ENCODE measurements at regions of chr10 and their contacts with region 1.

Region 1: DNA sequence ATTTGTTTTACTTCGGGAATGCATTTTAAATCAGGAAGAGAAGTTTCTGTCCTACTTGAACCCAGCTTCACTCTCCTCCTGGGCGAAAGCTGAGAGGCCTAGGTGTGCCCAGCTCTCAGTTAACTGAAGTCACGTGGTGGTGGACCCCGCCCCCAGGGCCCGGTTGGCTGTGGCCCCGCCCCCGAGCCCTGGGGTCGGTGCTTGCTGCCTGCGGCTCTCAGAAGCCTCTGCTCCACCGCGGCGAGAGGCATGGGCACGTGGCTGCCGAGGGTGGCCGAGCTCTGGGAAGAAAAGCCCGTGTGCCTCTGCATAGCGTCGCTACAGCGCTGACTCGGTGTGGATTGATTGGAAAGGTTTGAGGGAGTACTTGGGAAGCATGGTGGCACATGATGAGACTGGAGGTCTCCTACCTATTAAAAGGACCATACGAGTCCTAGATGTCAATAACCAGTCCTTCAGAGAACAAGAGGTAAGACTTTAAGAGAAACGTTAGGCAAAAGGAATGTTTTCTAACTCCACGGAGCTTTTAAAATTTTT is 34.1 kb downstream of the NET1 start:
- DNase-seq: peak; percentile 94 to 98
- H3K4me3 ChIP-seq: peak overlapping the region; percentile 96
- H3K4me3 Mint-ChIP-seq: peak overlapping the region; percentile 91
- H3K27ac Mint-ChIP-seq: peak overlapping the region; percentile 82
- H3K4me1 ChIP-seq: peaks cover 27% of the 10 kb centered on the region
- H3K4me1 Mint-ChIP-seq: peaks cover 13% of the 10 kb centered on the region
- H3K27me3 ChIP-seq: no peaks in the 10 kb centered on the region
- H3K27me3 Mint-ChIP-seq: no peaks in the 10 kb centered on the region
- CTCF ChIP-seq: peak in 1 of 2 experiments; percentile 6

Region 2: GRCh38 chr10:5466418-5467154 is 20.1 kb after region 1 on chr10:
- CTCF ChIA-PET with region 1: interaction called, 11 read pairs
- POLR2A ChIA-PET with region 1: interaction called, 4 read pairs
- intact Hi-C with region 1: loop called (anchors 2 kb)
- DNase-seq: peak in 1 of 2 experiments; percentile 45
- H3K4me3 ChIP-seq: no peak overlapping the region
- H3K4me3 Mint-ChIP-seq: no peak overlapping the region
- H3K27ac Mint-ChIP-seq: peak overlapping the region; percentile 40
- H3K4me1 ChIP-seq: peaks cover 39% of the 10 kb centered on the region
- H3K4me1 Mint-ChIP-seq: peaks cover 21% of the 10 kb centered on the region
- H3K27me3 ChIP-seq: no peaks in the 10 kb centered on the region
- H3K27me3 Mint-ChIP-seq: no peaks in the 10 kb centered on the region
- CTCF ChIP-seq: no peak

Region 3: DNA sequence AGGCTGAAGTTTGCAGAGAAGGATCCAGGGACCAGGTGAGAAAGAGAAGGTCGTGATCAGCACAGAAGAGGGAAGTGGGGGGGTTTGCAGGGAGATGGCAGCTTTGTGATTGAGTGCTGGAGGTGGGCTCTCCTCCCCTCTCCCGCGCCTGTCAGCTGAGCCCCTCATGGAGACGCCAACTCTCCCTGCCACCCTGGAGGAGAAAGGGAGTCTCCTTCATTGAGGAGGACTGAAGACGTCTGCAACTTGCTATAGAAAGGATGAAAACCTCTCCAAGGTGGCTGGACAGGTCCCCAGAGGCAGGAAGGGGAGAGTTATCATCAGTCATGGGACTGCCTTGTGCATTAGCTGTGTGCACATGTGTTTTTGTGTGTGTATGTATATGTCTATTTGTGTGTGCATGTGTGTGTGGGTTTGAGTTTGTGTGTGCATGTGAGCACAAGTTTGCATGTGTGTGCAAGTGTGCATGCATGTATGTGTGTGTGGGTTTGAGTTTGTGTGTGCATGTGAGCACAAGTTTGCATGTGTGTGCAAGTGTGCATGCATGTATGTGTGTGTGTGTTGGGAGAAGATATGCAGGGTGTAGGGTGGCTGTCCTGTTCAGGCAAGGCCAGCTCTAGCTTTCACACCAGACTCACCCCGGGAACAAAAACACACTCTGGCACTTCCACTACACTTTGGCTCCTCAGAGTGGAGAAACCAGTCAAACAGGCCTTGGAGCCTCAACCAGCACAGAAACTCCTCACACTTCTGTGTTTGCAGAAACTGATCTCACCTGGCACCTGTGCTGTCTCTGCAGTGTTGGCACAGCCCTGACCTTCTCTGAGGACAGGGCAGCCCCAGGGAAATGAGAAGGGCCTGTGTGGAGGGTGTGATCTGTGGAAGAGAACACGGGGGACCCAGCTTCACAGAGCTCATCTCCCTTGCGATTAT is 56.7 kb after region 1 on chr10:
- CTCF ChIA-PET with region 1: interaction called, 3 read pairs
- POLR2A ChIA-PET with region 1: interaction called, 5 read pairs
- intact Hi-C with region 1: loop called (anchors 2 kb)
- DNase-seq: peak; percentile 83 to 84
- H3K4me3 ChIP-seq: no peak overlapping the region
- H3K4me3 Mint-ChIP-seq: peak overlapping the region; percentile 25
- H3K27ac Mint-ChIP-seq: peak overlapping the region; percentile 84
- H3K4me1 ChIP-seq: peaks cover 32% of the 10 kb centered on the region
- H3K4me1 Mint-ChIP-seq: peaks cover 38% of the 10 kb centered on the region
- H3K27me3 ChIP-seq: no peaks in the 10 kb centered on the region
- H3K27me3 Mint-ChIP-seq: no peaks in the 10 kb centered on the region
- CTCF ChIP-seq: no peak

Region 4: DNA sequence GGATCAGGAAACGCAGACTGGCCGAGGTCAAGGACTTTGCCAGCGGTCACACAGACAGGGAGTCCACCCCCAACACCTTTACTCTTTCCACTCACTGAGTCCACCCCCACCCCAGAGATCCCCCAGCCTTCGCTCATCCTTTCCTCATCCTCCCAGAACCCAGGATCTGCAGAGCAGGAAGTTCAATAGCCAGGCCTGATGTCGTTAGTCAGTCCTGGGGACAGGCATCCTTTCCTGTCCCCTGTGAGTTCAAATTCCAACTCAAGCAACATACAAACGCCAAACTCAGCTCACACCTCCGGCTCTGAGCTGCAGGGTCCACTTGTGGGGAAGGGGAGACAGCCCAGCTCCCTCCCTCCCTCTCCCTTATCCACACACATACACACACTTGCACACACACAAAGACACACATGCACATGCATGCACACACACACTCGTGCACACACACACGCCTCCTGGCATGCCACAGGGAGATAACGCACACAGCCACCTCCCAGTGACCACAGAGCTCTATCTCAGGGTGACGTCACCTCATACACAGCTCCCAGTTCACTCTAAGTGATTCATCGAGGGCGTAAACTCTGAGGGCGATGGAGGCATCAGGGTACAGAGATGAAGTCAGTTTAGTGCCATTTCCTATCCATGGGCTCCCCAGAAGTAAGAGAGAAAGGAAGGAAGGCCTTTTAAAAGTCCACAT is 102.2 kb after region 1 on chr10:
- CTCF ChIA-PET with region 1: no interaction called
- POLR2A ChIA-PET with region 1: interaction called, 14 read pairs
- intact Hi-C with region 1: no loop called
- DNase-seq: peak; percentile 77 to 90
- H3K4me3 ChIP-seq: no peak overlapping the region
- H3K4me3 Mint-ChIP-seq: no peak overlapping the region
- H3K27ac Mint-ChIP-seq: no peak overlapping the region
- H3K4me1 ChIP-seq: peaks cover 65% of the 10 kb centered on the region
- H3K4me1 Mint-ChIP-seq: peaks cover 21% of the 10 kb centered on the region
- H3K27me3 ChIP-seq: no peaks in the 10 kb centered on the region
- H3K27me3 Mint-ChIP-seq: no peaks in the 10 kb centered on the region
- CTCF ChIP-seq: no peak

Region 5: DNA sequence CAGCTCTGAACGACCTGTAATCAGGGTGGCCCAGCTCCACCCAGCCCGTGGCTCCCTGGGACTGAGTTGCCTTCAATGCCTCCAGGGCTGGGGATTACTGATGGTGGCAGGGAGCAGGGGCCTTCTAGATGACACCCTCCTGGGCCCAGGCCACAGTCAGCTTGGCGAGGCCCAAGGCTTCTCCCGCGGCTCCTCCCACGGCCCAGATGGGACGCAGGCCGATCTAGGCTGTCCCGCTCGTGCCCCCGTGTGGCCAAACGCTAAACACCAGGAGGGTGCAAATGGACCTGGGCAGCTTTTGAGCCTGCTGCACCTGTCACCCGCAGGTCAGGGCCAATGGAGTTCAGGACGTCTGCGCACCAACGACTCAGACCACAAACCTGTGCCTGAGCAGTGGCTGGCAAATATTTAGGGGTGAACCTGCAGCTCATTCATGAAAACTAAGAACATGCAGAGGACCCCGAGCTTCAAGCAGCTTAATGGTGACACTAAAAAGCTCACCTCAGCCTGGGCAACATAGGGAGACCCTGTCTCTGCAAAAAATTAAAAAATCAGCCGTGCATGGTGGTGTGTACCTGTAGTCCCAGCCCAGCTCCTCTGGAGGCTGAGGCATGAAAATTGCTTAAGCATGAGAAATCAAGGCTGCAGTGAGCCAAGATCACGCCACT is 176.8 kb after region 1 on chr10:
- CTCF ChIA-PET with region 1: interaction called, 46 read pairs
- POLR2A ChIA-PET with region 1: interaction called, 14 read pairs
- intact Hi-C with region 1: loop called (anchors 1 kb)
- DNase-seq: peak; percentile 94 to 97
- H3K4me3 ChIP-seq: no peak overlapping the region
- H3K4me3 Mint-ChIP-seq: no peak overlapping the region
- H3K27ac Mint-ChIP-seq: peak overlapping the region; percentile 46
- H3K4me1 ChIP-seq: peaks cover 23% of the 10 kb centered on the region
- H3K4me1 Mint-ChIP-seq: peaks cover 20% of the 10 kb centered on the region
- H3K27me3 ChIP-seq: no peaks in the 10 kb centered on the region
- H3K27me3 Mint-ChIP-seq: no peaks in the 10 kb centered on the region
- CTCF ChIP-seq: peak; percentile 97

Region 6: GRCh38 chr10:5684318-5684970 is 238.0 kb after region 1 on chr10 and contains the start of gene TASOR2:
- CTCF ChIA-PET with region 1: no interaction called
- POLR2A ChIA-PET with region 1: interaction called, 7 read pairs
- intact Hi-C with region 1: loop called (anchors 2 kb)
- DNase-seq: peak; percentile 100
- H3K4me3 ChIP-seq: peak within 1 kb of the TSS; percentile 97
- H3K4me3 Mint-ChIP-seq: peak within 1 kb of the TSS; percentile 86
- H3K27ac Mint-ChIP-seq: peak within 1 kb of the TSS; percentile 96
- H3K4me1 ChIP-seq: peaks cover 12% of the 10 kb centered on the region
- H3K4me1 Mint-ChIP-seq: peaks cover 12% of the 10 kb centered on the region
- H3K27me3 ChIP-seq: no peaks in the 10 kb centered on the region
- H3K27me3 Mint-ChIP-seq: no peaks in the 10 kb centered on the region
- CTCF ChIP-seq: no peak
- total RNA-seq, gene TASOR2: 102 and 108 TPM in 2 replicates

Region 7: DNA sequence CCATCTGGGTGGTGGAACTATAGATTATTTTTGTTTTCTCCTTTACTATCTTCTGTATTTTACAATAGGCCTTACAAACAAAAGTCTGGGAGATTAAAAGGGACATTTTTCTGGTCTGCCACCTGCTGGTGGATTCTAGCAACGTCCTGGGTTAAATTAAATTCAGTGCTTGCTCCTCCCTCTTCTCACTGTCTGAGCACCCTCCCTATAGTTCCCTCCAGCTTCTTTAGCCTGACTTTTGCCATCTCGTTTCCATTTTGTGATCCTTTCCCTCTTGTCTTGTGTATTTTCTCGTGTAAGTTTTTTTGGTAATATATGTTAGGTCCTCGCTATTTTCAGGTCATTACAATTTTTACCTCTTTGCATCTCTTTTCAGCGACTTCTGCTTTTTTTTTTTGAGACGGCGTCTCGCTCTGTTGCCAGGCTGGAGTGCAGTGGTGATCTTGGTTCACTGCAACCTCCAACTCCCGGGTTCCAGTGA is 427.1 kb after region 1 on chr10:
- CTCF ChIA-PET with region 1: no interaction called
- POLR2A ChIA-PET with region 1: interaction called, 3 read pairs
- intact Hi-C with region 1: loop called (anchors 1 kb)
- DNase-seq: peak; percentile 65 to 82
- H3K4me3 ChIP-seq: no peak overlapping the region
- H3K4me3 Mint-ChIP-seq: no peak overlapping the region
- H3K27ac Mint-ChIP-seq: no peak overlapping the region
- H3K4me1 ChIP-seq: no peaks in the 10 kb centered on the region
- H3K4me1 Mint-ChIP-seq: no peaks in the 10 kb centered on the region
- H3K27me3 ChIP-seq: no peaks in the 10 kb centered on the region
- H3K27me3 Mint-ChIP-seq: no peaks in the 10 kb centered on the region
- CTCF ChIP-seq: peak; percentile 65 to 79